BJ (cell line): ENCODE measurements at regions of chr1 and their contacts with region 1.

Region 1: DNA sequence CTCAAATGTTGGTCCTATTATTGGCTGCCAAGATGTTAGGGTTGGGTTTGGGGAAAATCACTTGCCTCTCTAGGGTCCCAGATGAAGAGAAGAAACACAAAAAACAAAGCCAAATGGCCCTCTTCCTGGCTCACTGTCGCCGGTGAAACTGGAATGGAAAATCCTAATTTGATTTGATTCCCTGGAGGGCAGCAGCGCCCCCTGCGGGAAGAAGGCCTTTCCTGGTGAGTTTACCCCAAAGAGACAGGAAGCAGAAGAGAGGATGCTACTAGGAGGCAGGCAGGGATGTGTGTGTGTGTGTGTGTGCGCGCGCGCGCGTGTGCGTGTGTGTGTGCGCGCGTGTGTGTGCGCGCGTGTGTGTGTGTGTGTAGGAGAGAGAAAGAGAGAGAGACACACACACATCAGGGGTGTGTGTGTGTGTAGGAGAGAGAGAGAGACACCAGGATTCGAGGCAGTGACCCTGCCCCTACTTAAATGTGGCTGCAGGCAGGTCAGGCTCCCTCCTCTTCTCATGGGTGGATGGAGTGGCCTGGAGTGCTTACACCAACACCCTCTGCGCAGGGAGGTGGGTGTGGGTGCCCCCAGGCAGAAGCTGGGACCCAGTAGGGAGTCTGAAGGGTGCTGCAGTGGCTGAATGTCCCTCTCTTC is 3.1 kb upstream of the SELENON start:
- DNase-seq: no peak
- H3K4me3 ChIP-seq: no peak overlapping the region
- H3K27me3 ChIP-seq: peaks cover 2% of the 10 kb centered on the region
- CTCF ChIP-seq: peak; percentile 89

Region 2: DNA sequence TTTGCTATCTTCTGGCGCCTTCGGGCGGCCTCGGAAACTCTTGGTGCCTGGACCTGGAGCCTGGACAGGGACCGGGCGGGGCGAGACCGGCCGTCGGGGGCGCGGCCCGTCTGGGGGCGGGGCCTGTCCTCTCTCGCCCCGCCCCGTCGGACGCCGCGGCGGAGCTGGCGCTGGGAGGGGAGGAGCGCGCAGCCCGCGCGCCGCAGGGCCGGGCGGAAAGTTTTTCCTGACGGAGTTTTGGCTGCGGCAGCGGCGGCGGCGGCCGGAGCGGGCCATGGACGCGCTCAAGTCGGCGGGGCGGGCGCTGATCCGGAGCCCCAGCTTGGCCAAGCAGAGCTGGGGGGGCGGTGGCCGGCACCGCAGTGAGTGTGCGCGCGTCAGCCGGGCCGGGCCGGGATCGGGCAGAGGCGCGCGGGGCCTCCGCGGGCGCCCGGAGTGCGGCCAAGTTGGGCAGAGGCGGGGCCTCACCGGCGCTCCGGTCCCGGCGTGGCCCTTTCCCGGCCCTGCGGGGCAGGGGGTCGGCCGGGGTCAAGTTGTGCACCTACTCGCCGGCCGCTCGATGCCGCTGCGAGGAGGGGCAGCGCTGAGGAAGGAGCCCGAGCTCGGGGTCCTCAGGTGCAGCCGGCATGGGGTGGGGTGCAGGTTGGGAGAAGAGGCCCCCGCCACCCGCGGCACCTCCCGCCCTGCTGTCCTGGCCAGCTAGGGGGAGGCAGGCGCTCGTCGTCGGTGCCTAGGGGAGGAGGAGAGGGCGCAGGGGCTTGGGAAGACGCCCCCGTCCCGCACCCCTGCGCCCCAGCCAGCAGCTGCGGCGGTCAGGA is 253.3 kb before region 1 on chr1 and contains the start of gene LDLRAP1:
- CTCF ChIA-PET with region 1: no interaction called
- POLR2A ChIA-PET with region 1: no interaction called
- DNase-seq: no peak
- H3K4me3 ChIP-seq: peak within 1 kb of the TSS; percentile 70
- H3K27me3 ChIP-seq: peaks cover 3% of the 10 kb centered on the region; the same call in 1 of the 2 replicates
- CTCF ChIP-seq: no peak
- polyA plus RNA-seq, gene LDLRAP1: 17.1 and 27.2 TPM in 2 replicates

Region 3: GRCh38 chr1:25748531-25749205 is 48.3 kb before region 1 on chr1:
- CTCF ChIA-PET with region 1: no interaction called
- POLR2A ChIA-PET with region 1: no interaction called
- DNase-seq: no peak
- H3K4me3 ChIP-seq: no peak overlapping the region
- H3K27me3 ChIP-seq: peaks cover 9% of the 10 kb centered on the region
- CTCF ChIP-seq: no peak

Region 4: GRCh38 chr1:25810341-25811299 is 13.7 kb after region 1 on chr1:
- CTCF ChIA-PET with region 1: interaction called, 14 read pairs
- POLR2A ChIA-PET with region 1: no interaction called
- DNase-seq: no peak
- H3K4me3 ChIP-seq: no peak overlapping the region
- H3K27me3 ChIP-seq: no peaks in the 10 kb centered on the region
- CTCF ChIP-seq: peak; percentile 92

Region 5: DNA sequence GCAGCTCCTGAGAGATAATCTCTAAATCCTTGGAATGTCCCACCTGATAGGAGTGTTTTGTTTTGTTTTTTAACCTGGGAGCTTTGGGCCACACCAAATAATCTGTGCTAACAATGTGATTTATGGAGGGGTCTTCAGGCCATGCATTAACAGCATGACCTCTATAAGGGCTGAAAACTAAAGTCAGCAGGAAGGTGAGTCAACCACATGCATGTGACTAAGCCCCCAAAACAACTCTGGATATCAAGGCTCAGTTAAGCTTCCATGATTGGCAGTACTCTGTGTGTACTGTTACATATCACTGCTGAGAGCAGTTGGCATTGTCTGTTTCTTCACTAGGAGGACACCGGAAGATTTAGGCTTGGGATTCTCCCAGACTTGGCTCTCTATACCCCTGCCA is 51.6 kb after region 1 on chr1:
- CTCF ChIA-PET with region 1: no interaction called
- POLR2A ChIA-PET with region 1: no interaction called
- DNase-seq: no peak
- H3K4me3 ChIP-seq: no peak overlapping the region
- H3K27me3 ChIP-seq: no peaks in the 10 kb centered on the region
- CTCF ChIP-seq: no peak